ENCODE measurements at regions of chr18 and their contacts with region 1.

Region 1: DNA sequence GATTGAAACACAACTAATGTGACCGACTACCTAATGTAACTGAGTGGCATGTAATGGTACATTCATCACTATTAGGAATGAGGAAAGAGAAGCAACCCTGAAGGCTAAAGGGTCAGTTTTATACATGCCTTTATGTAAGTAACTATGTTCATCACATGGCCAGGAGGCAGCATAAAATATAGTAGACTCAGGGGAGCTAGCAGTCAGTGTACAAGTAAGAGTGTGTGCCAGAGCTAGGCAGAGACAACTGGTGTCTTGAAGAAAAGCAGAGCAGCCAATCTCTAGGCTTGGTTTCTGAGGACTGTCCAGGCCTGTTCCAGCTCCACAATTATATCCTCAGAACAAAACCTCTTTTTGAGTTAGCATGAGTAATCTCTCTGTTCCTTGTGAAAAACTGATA is 18.1 kb downstream of the SMAD2 start:
- DNase-seq: no peak
- ATAC-seq: no peak
- H3K4me3 ChIP-seq: no peak overlapping the region
- H3K4me3 Mint-ChIP-seq: no peak overlapping the region
- H3K27ac ChIP-seq: no peak overlapping the region
- H3K27ac Mint-ChIP-seq: no peak overlapping the region
- H3K4me1 ChIP-seq: no peaks in the 10 kb centered on the region
- H3K4me1 Mint-ChIP-seq: peaks cover 17% of the 10 kb centered on the region
- H3K27me3 ChIP-seq: no peaks in the 10 kb centered on the region
- H3K27me3 Mint-ChIP-seq: no peaks in the 10 kb centered on the region
- CTCF ChIP-seq: no peak

Region 2: GRCh38 chr18:47863041-47863440 is 49.3 kb before region 1 on chr18:
- CTCF ChIA-PET with region 1: no interaction called
- POLR2A ChIA-PET with region 1: no interaction called
- intact Hi-C with region 1: loop called (anchors 10 kb)
- DNase-seq: no peak
- ATAC-seq: no peak
- H3K4me3 ChIP-seq: no peak overlapping the region
- H3K4me3 Mint-ChIP-seq: no peak overlapping the region
- H3K27ac ChIP-seq: no peak overlapping the region
- H3K27ac Mint-ChIP-seq: no peak overlapping the region
- H3K4me1 ChIP-seq: no peaks in the 10 kb centered on the region
- H3K4me1 Mint-ChIP-seq: no peaks in the 10 kb centered on the region
- H3K27me3 ChIP-seq: no peaks in the 10 kb centered on the region
- H3K27me3 Mint-ChIP-seq: no peaks in the 10 kb centered on the region
- CTCF ChIP-seq: no peak